Gastrocnemius medialis (tissue), 4 donors: ENCODE measurements at regions of chr11 and their contacts with region 1.

Region 1: DNA sequence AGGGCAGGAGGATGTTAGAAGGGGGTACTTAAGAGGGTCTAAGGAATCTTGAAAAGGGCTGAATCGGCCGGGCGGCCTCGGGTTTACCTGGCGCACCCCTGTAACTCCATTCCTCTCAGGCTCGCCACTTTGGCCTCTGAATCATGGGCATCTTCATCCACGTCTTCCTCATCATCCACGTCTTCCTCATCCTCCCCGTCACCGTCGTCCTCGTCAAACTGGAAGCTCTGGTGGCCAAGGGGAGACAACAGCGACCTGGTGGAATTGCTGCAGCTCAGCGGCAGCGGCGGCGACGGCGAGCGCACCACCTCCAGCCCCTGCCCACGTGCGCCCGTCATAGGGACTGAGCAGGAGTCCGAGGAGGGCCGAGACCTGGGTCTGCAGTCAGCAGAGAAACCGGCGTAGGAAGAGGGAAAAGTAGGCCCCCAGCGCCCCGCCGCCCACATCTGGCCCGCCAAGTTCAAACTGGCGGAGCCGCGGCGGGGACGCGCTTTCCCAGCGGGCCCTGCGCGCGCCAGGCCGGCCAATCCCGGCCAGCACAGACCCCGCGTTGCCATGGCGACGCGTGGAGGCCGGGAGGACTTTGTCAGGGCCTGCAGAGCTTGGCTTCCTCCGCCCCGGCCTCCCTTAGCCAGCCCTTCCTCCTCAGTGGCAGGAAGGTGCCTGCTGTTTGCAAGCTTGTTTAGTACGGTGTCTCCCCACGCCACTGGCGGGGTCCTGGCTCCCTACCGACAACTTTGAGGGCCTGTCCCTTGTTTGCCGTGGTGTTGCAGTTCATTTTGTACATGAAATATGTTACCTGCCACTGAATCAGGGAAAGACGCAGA is at the start of gene CCDC34:
- DNase-seq: peak; percentile 70 to 78
- ATAC-seq: peak; percentile 89 to 92
- H3K4me3 ChIP-seq: peak within 1 kb of the TSS; percentile 60 to 73 (median 66)
- H3K27ac ChIP-seq: peak within 1 kb of the TSS in 3 of 4 donors; percentile 40 to 56 (median 45)
- H3K4me1 ChIP-seq: peaks cover 8 to 13% of the 10 kb centered on the region in 2 donors
- H3K27me3 ChIP-seq: no peaks in the 10 kb centered on the region
- CTCF ChIP-seq: no peak
- POLR2A ChIP-seq: no peak
- total RNA-seq, gene CCDC34: 0.24 to 1.3 (median 0.64) TPM

Region 2: DNA sequence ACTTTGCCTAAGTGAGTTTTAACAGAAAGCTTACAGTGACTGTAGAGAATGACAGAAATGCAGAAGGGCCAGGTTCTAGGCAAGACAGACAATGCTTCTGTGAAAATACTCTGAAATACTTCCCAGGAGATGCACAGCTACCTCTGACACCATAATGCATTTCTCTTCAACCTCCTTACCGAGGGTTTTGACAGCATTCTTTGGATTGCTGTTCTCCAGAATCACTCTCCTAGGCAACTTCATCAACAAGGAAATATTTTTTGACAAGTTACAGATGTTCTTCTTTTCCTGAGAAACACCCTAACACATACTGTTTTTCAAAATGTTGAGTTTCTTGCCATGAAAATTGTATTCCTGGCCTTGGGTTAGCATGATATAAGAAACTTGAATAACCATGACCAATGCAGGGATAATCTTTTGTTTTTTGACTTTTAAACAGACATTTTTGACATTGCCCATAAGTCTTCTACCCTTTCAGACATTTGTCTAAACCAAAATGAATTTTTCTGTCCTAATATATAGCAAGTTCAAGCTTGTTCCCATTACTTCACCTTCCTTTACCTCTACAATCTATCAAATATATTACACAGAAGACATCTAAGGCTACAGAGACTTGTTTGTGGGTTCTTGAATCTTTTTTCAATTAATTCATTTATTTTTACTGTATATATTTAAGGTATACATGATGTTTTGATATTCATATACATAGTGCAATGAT is 108.1 kb before region 1 on chr11:
- in situ Hi-C with region 1: no loop called
- intact Hi-C with region 1: no loop called
- DNase-seq: no peak
- ATAC-seq: no peak
- H3K4me3 ChIP-seq: no peak overlapping the region
- H3K27ac ChIP-seq: no peak overlapping the region
- H3K4me1 ChIP-seq: no peaks in the 10 kb centered on the region
- H3K27me3 ChIP-seq: no peaks in the 10 kb centered on the region
- CTCF ChIP-seq: no peak
- POLR2A ChIP-seq: no peak

Region 3: DNA sequence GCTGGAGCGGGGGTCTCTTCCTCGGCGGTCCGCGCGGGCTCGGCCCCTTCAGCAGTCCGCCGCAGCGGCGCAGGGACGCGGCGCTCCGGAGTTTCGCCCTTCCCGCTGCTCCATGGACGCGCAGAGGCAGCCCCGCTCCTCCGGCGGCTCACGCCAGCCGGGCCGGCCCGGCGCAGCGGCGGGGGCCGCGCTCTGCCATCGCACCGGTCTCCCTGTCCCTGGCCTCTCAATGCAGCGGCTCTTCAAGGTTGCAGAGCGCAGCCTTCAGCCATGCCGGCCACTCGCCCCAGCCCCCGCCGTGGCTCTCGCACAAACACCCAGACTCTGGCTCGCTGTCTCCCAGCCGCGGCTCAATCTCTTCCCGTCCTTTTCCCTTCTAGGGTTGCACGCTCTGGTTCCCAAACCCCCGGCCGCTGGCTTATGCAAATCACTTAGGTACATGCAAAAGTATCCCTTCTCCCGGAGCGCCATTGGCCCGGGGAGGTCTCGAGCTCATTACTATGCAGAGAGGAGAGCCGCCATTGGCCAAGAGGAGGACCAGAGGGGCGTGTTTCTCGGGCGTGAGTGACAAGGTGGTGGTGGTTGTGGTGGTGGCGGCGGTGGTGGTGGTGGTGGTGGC is 109.5 kb after region 1 on chr11 and contains the start of gene LGR4:
- in situ Hi-C with region 1: loop called in 1 of 4 experiments (anchors 25 kb)
- intact Hi-C with region 1: loop called (anchors 5 kb)
- DNase-seq: peak; percentile 93 to 94
- ATAC-seq: peak; percentile 92 to 95
- H3K4me3 ChIP-seq: peak within 1 kb of the TSS; percentile 62 to 78 (median 66)
- H3K27ac ChIP-seq: peak within 1 kb of the TSS; percentile 74 to 87 (median 82)
- H3K4me1 ChIP-seq: peaks cover 19 to 30% of the 10 kb centered on the region in 2 donors
- H3K27me3 ChIP-seq: no peaks in the 10 kb centered on the region
- CTCF ChIP-seq: no peak
- POLR2A ChIP-seq: peak; percentile 72 to 80
- total RNA-seq, gene LGR4: 5.5 to 37.6 (median 11.8) TPM

Region 4: DNA sequence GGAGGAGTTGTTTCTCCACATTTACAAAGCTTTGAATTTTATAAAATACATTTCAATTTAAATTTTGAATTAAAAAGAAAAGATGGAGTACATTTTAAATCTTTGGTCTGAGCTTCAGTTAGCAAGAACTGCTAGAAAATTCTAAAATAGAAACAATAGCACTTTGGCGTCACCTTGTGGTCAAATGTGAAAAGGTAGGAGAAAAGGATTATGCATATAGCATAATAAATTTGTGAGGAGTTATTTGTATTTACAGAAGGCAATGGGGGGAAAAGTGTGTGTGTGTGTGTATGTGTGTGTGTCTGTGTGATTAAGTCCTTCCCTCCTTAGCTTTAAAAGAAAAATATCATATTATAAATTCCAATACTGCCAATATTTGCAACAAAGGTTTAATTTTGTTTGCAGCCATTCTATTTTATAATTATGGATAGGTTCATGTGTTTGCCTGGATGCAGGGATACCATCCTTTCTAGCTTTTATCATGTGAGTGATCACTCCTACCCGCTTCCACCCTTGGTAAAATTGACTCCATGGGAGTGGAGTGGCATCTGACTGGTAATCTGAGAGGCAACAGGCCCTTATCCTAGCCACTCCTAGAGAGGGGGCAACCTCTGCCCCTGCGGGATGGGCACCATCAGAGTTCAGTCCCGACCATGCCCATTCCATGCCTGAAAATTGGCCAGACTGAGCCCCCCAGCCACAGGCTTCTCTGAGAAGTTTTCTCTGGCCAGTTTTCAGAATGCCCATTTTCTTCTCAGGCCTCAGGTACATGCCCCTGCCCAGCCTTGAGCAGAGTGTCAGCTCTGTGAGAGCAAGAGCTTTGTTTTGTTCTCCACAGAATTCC is 123.2 kb after region 1 on chr11:
- in situ Hi-C with region 1: loop called in 2 of 4 experiments (anchors 10 to 25 kb)
- intact Hi-C with region 1: no loop called
- DNase-seq: no peak
- ATAC-seq: peak in 1 of 2 donors; percentile 47
- H3K4me3 ChIP-seq: no peak overlapping the region
- H3K27ac ChIP-seq: no peak overlapping the region
- H3K4me1 ChIP-seq: no peaks in the 10 kb centered on the region
- H3K27me3 ChIP-seq: no peaks in the 10 kb centered on the region
- CTCF ChIP-seq: peak; percentile 77 to 96 (median 89)
- POLR2A ChIP-seq: no peak

Region 5: GRCh38 chr11:27497284-27497866 is 134.4 kb after region 1 on chr11:
- in situ Hi-C with region 1: loop called in 2 of 4 experiments (anchors 10 to 25 kb)
- intact Hi-C with region 1: no loop called
- DNase-seq: no peak
- ATAC-seq: no peak
- H3K4me3 ChIP-seq: no peak overlapping the region
- H3K27ac ChIP-seq: no peak overlapping the region
- H3K4me1 ChIP-seq: peaks cover 20 to 22% of the 10 kb centered on the region in 2 donors
- H3K27me3 ChIP-seq: no peaks in the 10 kb centered on the region
- CTCF ChIP-seq: peak in 2 of 5 experiments; percentile 30 to 48
- POLR2A ChIP-seq: no peak